ENCODE measurements at regions of chr4 and their contacts with region 1.

Region 1: DNA sequence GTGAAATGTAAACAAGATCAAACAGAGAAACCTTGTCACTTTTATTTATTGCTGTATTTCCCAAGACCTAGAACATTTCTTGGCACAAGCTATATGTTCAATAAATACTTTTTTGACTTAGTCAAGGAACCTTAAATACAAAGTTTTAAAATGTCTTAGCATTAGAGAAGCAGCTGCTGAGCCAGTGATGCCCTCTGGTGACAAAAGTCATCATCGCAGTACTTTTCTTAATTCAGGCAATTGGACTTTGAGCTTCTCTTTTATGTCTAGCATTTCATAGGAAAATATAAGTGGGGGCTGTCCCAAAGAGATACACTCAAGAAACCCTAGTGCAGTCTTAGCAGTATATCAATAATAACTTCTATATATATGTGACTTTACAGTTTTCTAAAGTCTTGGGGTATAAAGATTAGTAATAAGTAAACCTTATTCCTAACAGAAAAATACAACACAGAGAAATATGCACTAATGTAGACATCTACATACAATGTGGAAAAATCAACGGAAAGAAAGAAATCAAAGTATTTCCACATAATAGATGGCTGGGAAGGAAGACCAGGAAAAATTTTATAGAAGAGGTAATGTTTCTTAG is 118.4 kb downstream of the DTHD1 start:
- DNase-seq: peak; percentile 24
- CTCF ChIP-seq: peak; percentile 86

Region 2: GRCh38 chr4:36348403-36348938 is 51.4 kb before region 1 on chr4:
- in situ Hi-C with region 1: loop called (anchors 10 kb)
- DNase-seq: peak; percentile 61
- CTCF ChIP-seq: no peak